ENCODE measurements at regions of chr7 and their contacts with region 1.

Region 1: DNA sequence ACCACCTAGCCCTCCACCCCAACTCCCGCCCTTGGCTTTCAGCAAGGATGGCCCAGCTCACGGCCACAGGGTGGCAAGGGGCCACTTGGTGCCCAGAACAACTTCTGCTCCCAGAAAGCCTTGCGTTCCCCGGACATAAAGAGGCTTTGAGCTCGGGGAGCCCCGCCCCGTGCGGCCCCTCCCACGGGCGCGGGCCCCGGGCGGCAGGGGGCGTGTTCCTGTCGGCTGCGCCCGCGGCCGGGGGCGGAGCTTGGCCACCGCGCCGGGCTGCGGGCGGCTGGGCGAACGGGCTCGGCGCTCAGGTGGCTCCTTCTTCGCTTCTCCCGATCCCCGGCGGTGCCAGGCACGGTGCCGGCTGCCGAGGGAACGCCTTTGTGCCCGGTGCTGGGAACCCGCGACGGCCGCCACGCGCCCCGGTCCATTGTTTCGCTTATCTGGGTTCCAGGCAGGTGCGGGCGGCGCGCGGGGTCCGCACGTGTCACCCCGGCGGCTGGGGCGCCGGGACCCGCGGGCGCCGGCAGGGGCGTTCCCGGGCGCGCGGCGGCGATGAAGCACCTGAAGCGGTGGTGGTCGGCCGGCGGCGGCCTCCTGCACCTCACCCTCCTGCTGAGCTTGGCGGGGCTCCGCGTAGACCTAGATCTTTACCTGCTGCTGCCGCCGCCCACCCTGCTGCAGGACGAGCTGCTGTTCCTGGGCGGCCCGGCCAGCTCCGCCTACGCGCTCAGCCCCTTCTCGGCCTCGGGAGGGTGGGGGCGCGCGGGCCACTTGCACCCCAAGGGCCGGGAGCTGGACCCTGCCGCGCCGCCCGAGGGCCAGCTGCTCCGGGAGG is at the start of gene NFE2L3:
- DNase-seq: peak; percentile 83
- H3K4me3 Mint-ChIP-seq: peak within 1 kb of the TSS; percentile 97
- H3K27ac Mint-ChIP-seq: peak within 1 kb of the TSS; percentile 97
- H3K4me1 Mint-ChIP-seq: peaks cover 60% of the 10 kb centered on the region
- H3K27me3 Mint-ChIP-seq: peaks cover 2% of the 10 kb centered on the region
- total RNA-seq, gene NFE2L3: 80.1 TPM in 2 replicates

Region 2: GRCh38 chr7:25951031-25951948 is 200.9 kb before region 1 on chr7:
- intact Hi-C with region 1: loop called (anchors 5 kb)
- DNase-seq: peak; percentile 87
- H3K4me3 Mint-ChIP-seq: peak overlapping the region; percentile 91
- H3K27ac Mint-ChIP-seq: peak overlapping the region; percentile 74
- H3K4me1 Mint-ChIP-seq: peaks cover 17% of the 10 kb centered on the region
- H3K27me3 Mint-ChIP-seq: peaks cover 5% of the 10 kb centered on the region

Region 3: GRCh38 chr7:26011039-26011696 is 141.0 kb before region 1 on chr7:
- intact Hi-C with region 1: no loop called
- DNase-seq: no peak
- H3K4me3 Mint-ChIP-seq: no peak overlapping the region
- H3K27ac Mint-ChIP-seq: no peak overlapping the region
- H3K4me1 Mint-ChIP-seq: no peaks in the 10 kb centered on the region
- H3K27me3 Mint-ChIP-seq: peaks cover 16% of the 10 kb centered on the region

Region 4: DNA sequence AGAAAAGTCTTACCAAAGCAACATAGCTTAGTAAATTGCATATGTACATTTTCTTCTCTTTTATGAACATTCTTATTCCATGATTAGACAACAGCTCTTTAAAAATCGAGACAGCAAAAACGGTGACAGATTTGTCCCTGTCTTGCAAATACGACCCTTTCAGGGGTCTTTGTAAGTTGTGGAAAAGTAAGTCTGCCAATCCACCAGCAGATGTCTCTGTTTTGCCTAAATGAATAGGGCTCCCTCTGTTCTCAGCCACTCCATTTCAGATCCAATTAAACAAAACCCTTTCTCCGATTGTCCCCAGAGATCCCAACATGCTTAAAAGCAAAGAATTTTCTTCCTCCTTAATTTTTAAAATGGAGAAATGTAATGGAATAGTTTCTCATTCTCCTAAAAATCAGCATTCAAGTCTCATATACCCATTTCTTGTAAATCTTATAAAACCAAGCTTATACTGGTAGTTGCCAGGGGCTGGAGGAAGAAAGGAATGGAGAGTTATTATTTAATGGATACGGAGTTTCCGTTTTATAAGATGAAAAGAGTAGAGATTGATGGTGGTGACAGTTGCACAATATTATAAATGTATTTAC is 61.1 kb before region 1 on chr7:
- intact Hi-C with region 1: loop called (anchors 1 kb)
- DNase-seq: no peak
- H3K4me3 Mint-ChIP-seq: no peak overlapping the region
- H3K27ac Mint-ChIP-seq: peak overlapping the region; percentile 6
- H3K4me1 Mint-ChIP-seq: peaks cover 22% of the 10 kb centered on the region
- H3K27me3 Mint-ChIP-seq: no peaks in the 10 kb centered on the region

Region 5: GRCh38 chr7:26117142-26117807 is 34.9 kb before region 1 on chr7:
- intact Hi-C with region 1: no loop called
- DNase-seq: no peak
- H3K4me3 Mint-ChIP-seq: no peak overlapping the region
- H3K27ac Mint-ChIP-seq: no peak overlapping the region
- H3K4me1 Mint-ChIP-seq: peaks cover 8% of the 10 kb centered on the region
- H3K27me3 Mint-ChIP-seq: peaks cover 5% of the 10 kb centered on the region

Region 6: GRCh38 chr7:26167301-26167934 is 15.3 kb after region 1 on chr7:
- intact Hi-C with region 1: loop called (anchors 1 kb)
- DNase-seq: no peak
- H3K4me3 Mint-ChIP-seq: peak overlapping the region; percentile 16
- H3K27ac Mint-ChIP-seq: peak overlapping the region; percentile 79
- H3K4me1 Mint-ChIP-seq: peaks cover 64% of the 10 kb centered on the region
- H3K27me3 Mint-ChIP-seq: no peaks in the 10 kb centered on the region

Region 7: DNA sequence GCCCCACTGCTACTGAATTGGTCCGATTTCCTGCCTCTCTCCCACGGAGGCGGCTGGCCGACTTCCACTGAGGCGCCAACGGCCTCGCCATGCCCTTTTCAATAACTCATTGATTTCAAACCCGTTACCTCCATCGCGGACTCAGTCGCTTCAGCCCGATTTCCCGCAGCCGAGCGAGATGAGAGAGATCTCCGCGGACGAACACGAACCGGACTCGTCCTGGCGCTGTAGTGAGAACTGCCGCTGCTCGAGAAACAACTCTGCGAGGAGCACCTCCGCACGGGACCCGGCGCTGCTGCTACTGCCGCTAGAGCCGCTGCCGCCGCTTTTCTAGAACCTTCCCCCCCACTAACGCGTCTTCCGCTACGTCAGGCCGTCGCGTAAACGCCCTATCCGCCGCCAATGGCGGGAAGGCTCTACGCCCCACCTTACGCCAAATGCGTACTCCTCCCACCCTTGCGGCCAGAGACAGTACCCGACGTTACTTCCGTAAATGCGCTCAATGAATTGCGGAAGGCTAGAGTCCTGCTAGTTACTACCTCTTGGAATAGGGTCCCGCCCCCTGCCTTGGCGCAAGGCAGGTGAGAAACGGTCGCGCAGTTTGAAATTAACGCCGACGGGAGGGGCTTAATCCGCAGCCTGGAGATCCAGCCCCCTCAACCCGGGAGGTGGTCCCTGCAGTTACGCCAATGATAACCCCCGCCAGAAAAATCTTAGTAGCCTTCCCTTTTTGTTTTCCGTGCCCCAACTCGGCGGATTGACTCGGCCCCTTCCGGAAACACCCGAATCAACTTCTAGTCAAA is 48.5 kb after region 1 on chr7 and contains the start of gene HNRNPA2B1:
- intact Hi-C with region 1: loop called (anchors 1 kb)
- DNase-seq: peak; percentile 97
- H3K4me3 Mint-ChIP-seq: peak within 1 kb of the TSS; percentile 100
- H3K27ac Mint-ChIP-seq: peak within 1 kb of the TSS; percentile 100
- H3K4me1 Mint-ChIP-seq: peaks cover 47% of the 10 kb centered on the region
- H3K27me3 Mint-ChIP-seq: no peaks in the 10 kb centered on the region
- total RNA-seq, gene HNRNPA2B1: 821 and 823 TPM in 2 replicates

Region 8: DNA sequence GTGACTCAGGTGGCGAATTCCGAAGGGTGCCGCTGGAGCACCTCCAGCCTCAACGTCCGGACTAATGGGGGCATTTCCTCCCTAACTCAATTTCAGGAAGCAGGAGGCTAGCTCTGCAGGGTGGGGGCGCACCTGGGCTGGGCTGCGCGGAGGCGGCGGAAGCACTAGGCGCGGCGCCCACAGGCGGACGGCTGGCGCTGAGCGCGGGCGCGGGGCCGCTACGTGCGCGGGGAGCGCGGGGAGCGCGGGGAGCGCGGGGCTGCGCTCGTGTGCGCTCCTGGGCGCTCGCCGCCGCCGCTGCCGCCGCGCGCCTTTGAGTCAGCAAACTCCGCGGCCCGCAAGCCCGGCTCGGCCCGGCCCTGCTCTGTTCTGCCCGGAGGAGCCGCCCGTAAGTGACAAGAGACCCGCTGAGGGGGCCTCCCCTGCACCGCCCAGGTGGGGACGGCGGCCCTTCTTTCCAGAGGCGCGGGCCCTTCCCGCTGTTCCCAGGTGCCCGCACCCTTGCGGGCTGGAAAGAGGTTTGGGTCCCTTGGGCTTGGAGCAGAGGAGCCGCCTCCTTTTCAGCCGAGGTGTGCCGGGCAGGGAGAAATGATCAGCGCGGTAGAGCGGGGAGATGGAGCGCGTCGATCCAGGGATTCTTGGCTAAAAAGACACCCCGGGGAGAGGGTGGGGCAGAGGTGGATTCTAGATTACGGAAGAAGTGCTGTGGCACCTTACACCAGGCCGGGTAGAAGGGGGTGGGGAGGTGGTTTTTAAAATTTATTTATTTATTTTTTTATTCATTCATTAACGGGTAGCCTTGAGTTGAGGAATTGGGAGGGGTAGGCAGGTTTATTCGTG is 139.8 kb after region 1 on chr7 and contains the start of gene SNX10:
- intact Hi-C with region 1: loop called (anchors 1 kb)
- DNase-seq: peak; percentile 63
- H3K4me3 Mint-ChIP-seq: peak within 1 kb of the TSS; percentile 92
- H3K27ac Mint-ChIP-seq: peak within 1 kb of the TSS; percentile 92
- H3K4me1 Mint-ChIP-seq: peaks cover 40% of the 10 kb centered on the region
- H3K27me3 Mint-ChIP-seq: no peaks in the 10 kb centered on the region
- total RNA-seq, gene SNX10: 41.9 and 48.3 TPM in 2 replicates

Region 9: DNA sequence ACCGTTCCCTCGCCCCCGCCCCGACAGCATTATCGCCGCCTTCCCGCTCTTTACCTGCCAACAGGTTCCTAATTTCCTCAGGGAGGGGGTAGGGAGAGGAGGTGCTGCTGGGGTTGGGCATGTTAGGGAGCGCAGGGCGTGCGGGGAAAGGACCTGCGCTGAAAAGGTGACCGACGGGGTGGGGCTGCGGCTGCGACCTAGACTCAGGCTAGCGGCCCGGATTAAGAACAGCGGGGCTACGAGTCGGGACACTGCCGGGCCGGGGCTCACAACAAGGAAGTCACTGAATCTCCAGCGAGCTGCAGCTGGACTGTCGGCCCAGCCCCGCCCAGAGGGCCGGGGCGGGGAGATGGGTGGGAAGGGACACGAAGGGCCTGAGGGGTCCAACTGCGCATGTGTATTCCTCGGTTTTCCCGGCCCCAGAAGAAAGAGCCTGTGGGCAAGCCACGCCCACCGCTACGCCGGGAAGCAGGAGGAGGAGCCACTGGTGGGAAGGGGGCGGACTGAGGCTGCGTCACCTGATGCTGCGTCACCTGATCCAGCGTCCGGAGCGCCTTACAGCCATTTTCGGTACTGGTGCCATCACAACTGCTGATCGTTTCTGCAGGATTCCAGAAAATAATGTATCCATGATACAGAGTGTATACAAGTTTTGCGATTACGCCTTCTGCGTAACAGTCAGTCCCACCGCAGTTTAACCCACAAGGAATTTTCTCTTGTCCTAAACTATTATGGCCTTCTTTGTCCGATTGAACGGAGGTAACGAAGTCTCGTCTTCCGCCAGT is 712.3 kb after region 1 on chr7 and contains the start of gene SKAP2:
- intact Hi-C with region 1: loop called (anchors 10 kb)
- DNase-seq: peak; percentile 83
- H3K4me3 Mint-ChIP-seq: peak within 1 kb of the TSS; percentile 93
- H3K27ac Mint-ChIP-seq: peak within 1 kb of the TSS; percentile 78
- H3K4me1 Mint-ChIP-seq: peaks cover 21% of the 10 kb centered on the region
- H3K27me3 Mint-ChIP-seq: peaks cover 29% of the 10 kb centered on the region
- total RNA-seq, gene SKAP2: 3.2 and 3.3 TPM in 2 replicates